IMR-90 (cell line): ENCODE measurements at regions of chr17 and their contacts with region 1.

Region 1: DNA sequence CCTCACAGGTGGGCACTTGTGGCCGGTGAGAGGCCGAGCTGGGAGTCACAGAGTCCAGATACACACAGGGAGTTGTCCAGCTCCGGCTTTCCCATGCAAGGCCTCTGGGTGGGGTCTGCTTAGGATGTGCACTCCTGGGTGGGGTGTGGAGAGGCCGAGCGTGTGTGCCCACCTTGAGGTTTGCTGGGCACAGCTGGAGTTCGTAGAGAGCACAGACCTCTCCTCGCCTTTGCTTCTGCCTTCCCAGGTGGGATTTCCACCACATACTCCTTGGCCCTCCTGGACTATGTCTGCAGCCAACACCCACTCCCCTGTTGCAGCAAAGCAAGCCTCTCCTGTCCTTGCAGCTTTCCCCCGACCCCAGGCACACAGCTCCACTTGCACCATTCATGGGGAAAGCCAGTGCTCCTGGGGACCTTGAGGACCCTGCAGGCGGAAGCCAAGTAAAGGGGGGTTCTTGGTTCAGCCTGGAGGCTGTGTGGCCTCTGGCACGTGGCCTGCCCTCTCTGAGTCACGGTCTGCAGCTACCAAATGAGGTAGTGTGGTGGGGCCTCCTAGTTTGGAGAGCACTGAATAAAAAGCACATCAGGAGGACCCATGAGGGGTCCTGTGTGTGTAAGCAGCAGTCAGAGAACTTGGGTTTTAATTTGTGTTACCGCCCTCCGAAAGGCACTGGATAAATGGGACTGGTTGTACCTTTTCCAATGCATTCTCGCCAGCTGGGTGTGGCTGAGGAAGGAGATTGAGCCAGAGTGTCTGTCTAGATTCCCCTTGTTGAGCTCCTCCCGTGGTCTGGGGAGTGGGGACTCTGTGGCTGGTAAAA is 31.5 kb downstream of the MPRIP start:
- DNase-seq: peak; percentile 15
- ATAC-seq: peak; percentile 25; the same call in 1 of the 2 replicates
- H3K4me3 ChIP-seq: no peak overlapping the region
- H3K27ac ChIP-seq: no peak overlapping the region
- H3K4me1 ChIP-seq: peaks cover 28% of the 10 kb centered on the region
- H3K27me3 ChIP-seq: no peaks in the 10 kb centered on the region
- CTCF ChIP-seq: no peak
- POLR2A ChIP-seq: no peak
- RAD21 ChIP-seq: no peak

Region 2: GRCh38 chr17:17108451-17109049 is 34.8 kb after region 1 on chr17:
- CTCF ChIA-PET with region 1: no interaction called
- POLR2A ChIA-PET with region 1: no interaction called
- dilution Hi-C with region 1: no loop called
- in situ Hi-C with region 1: no loop called
- intact Hi-C with region 1: loop called (anchors 5 kb)
- DNase-seq: no peak
- ATAC-seq: peak; percentile 57
- H3K4me3 ChIP-seq: no peak overlapping the region
- H3K27ac ChIP-seq: peak overlapping the region; percentile 35; the same call in 1 of the 2 replicates
- H3K4me1 ChIP-seq: peaks cover 31% of the 10 kb centered on the region
- H3K27me3 ChIP-seq: no peaks in the 10 kb centered on the region
- CTCF ChIP-seq: no peak
- POLR2A ChIP-seq: no peak
- RAD21 ChIP-seq: no peak